Natural killer cell (primary cell): ENCODE measurements at regions of chr9 and their contacts with region 1.

Region 1: GRCh38 chr9:114738581-114739316 is 56.8 kb upstream of the TEX48 start:
- DNase-seq: peak; percentile 55 to 90
- ATAC-seq: peak; percentile 87 to 92 (median 88)
- H3K4me3 ChIP-seq: no peak overlapping the region
- H3K4me3 Mint-ChIP-seq: no peak overlapping the region
- H3K27ac ChIP-seq: no peak overlapping the region
- H3K27ac Mint-ChIP-seq: no peak overlapping the region
- H3K4me1 ChIP-seq: peaks cover 18% of the 10 kb centered on the region
- H3K4me1 Mint-ChIP-seq: peaks cover 9 to 16% of the 10 kb centered on the region in 2 donors
- H3K27me3 ChIP-seq: no peaks in the 10 kb centered on the region
- H3K27me3 Mint-ChIP-seq: no peaks in the 10 kb centered on the region
- CTCF ChIP-seq: peak; percentile 82

Region 2: GRCh38 chr9:114681594-114682332 is 57.0 kb before region 1 on chr9 and contains the start of gene TEX48:
- intact Hi-C with region 1: loop called (anchors 2 kb)
- DNase-seq: peak; percentile 30 to 92
- ATAC-seq: peak; percentile 87 to 90 (median 88)
- H3K4me3 ChIP-seq: no peak within 1 kb of the TSS
- H3K4me3 Mint-ChIP-seq: no peak within 1 kb of the TSS
- H3K27ac ChIP-seq: no peak within 1 kb of the TSS
- H3K27ac Mint-ChIP-seq: no peak within 1 kb of the TSS
- H3K4me1 ChIP-seq: peaks cover 6% of the 10 kb centered on the region
- H3K4me1 Mint-ChIP-seq: peaks cover 0 to 5% of the 10 kb centered on the region in 2 donors
- H3K27me3 ChIP-seq: no peaks in the 10 kb centered on the region
- H3K27me3 Mint-ChIP-seq: peaks cover 4 to 27% of the 10 kb centered on the region in 2 donors
- CTCF ChIP-seq: peak; percentile 81
- total RNA-seq, gene TEX48: not detected